ENCODE measurements at regions of chr13 and their contacts with region 1.

Region 1: GRCh38 chr13:112072531-112073244 is 5.7 kb downstream of the SOX1 start:
- DNase-seq: no peak
- H3K4me3 Mint-ChIP-seq: no peak overlapping the region
- H3K27ac Mint-ChIP-seq: no peak overlapping the region
- H3K4me1 Mint-ChIP-seq: no peaks in the 10 kb centered on the region
- H3K27me3 Mint-ChIP-seq: peaks cover 66% of the 10 kb centered on the region

Region 2: DNA sequence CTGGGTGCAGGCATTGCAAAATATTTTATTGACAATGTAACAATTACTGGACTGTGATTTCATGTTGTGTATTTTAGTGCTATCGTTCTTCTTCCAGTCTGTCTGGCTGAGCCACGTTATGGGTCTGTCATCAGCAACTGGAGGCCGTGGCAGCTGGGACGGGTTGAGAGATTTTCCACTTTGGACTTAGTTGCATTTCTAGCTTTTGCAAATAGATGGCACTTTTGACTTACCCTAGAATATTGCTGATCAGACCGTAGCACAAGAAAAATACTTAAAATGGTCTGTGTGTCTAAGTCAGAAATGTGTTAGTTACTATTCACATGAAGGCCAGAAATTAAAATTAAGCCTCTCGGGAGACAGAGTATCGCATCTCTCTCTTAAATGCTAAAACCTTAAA is 541.2 kb before region 1 on chr13:
- intact Hi-C with region 1: no loop called
- DNase-seq: no peak
- H3K4me3 Mint-ChIP-seq: no peak overlapping the region
- H3K27ac Mint-ChIP-seq: no peak overlapping the region
- H3K4me1 Mint-ChIP-seq: no peaks in the 10 kb centered on the region
- H3K27me3 Mint-ChIP-seq: peaks cover 44% of the 10 kb centered on the region

Region 3: GRCh38 chr13:112055036-112055914 is 17.4 kb before region 1 on chr13:
- intact Hi-C with region 1: loop called (anchors 2 kb)
- DNase-seq: no peak
- H3K4me3 Mint-ChIP-seq: no peak overlapping the region
- H3K27ac Mint-ChIP-seq: peak overlapping the region; percentile 16
- H3K4me1 Mint-ChIP-seq: no peaks in the 10 kb centered on the region
- H3K27me3 Mint-ChIP-seq: peaks cover 68% of the 10 kb centered on the region